Panc1 (cell line): ENCODE measurements at regions of chr2 and their contacts with region 1.

Region 1: GRCh38 chr2:119028327-119029174 is 86.6 kb downstream of the MARCO start:
- DNase-seq: peak; percentile 17
- ATAC-seq: peak; percentile 85
- H3K4me3 ChIP-seq: no peak overlapping the region
- H3K27ac ChIP-seq: no peak overlapping the region
- H3K4me1 ChIP-seq: no peaks in the 10 kb centered on the region
- H3K27me3 ChIP-seq: peaks cover 4% of the 10 kb centered on the region; the same call in 1 of the 2 replicates
- CTCF ChIP-seq: peak; percentile 80

Region 2: DNA sequence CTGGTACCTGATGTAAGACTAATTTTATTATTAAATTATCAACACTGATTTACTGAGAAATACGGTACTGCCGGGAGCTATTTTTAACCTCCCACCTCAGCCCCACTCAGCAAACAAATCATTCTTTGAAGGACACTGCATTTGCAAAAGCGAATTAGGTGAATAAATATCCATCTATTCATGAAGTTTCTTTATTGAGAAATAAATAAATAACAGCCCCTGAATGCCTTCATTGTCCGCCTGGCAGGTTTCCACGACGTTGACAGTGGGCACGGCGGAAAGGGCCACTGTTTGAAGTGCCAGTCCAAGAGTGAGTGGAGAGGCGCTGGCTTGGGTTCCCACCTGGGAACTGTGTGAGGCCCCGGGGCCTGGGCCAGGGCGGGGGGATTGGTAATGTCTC is 114.3 kb after region 1 on chr2:
- CTCF ChIA-PET with region 1: no interaction called
- POLR2A ChIA-PET with region 1: no interaction called
- in situ Hi-C with region 1: no loop called
- intact Hi-C with region 1: no loop called
- DNase-seq: no peak
- ATAC-seq: no peak
- H3K4me3 ChIP-seq: no peak overlapping the region
- H3K27ac ChIP-seq: no peak overlapping the region
- H3K4me1 ChIP-seq: no peaks in the 10 kb centered on the region
- H3K27me3 ChIP-seq: peaks cover 2% of the 10 kb centered on the region; the same call in 1 of the 2 replicates
- CTCF ChIP-seq: no peak

Region 3: DNA sequence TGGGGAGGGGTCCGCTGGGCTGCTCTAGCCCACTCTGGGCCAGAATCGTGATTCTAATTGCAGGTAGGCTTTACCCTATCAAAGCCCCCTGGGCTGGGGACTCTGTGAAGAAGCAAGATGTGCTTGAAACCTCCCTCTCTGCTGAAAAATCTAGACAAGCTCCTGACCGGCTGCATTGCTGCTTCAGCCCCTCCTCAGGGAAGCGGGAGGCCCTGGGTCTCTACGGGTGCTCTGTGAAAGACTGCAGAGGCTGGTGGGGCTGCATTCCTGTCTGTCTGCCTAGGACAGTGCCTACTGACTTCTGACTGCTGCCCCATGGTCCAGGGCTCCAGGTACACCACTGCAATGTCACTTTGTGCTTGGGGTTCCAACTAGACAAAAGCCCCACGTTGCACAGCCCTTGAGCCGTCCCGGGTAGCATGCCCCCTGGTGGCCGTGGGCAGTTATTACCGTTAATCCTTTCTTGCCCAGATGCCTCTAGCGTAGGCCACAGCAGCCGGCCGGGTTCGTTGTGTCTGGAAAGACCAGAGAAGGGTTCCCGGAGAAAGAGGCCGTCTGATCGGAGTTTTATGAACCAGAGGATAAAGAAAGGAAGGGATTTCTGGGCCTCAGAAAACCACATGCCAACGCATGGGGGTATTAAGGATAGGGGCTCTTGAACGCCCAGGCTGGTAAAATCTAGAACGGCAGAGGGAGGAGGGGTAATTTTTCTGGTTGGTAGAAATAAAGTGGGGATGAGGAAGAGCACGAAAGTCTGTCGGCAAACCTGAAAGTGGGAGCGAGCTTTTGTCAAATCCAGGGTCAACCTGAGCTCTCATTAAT is 145.9 kb after region 1 on chr2:
- CTCF ChIA-PET with region 1: no interaction called
- POLR2A ChIA-PET with region 1: no interaction called
- in situ Hi-C with region 1: no loop called
- intact Hi-C with region 1: loop called (anchors 1 kb)
- DNase-seq: no peak
- ATAC-seq: peak; percentile 97
- H3K4me3 ChIP-seq: peak overlapping the region in 1 of 2 experiments; percentile 18; a peak in 2 of 4 replicates
- H3K27ac ChIP-seq: no peak overlapping the region
- H3K4me1 ChIP-seq: no peaks in the 10 kb centered on the region; the same call in 1 of the 2 replicates
- H3K27me3 ChIP-seq: no peaks in the 10 kb centered on the region
- CTCF ChIP-seq: peak; percentile 96

Region 4: DNA sequence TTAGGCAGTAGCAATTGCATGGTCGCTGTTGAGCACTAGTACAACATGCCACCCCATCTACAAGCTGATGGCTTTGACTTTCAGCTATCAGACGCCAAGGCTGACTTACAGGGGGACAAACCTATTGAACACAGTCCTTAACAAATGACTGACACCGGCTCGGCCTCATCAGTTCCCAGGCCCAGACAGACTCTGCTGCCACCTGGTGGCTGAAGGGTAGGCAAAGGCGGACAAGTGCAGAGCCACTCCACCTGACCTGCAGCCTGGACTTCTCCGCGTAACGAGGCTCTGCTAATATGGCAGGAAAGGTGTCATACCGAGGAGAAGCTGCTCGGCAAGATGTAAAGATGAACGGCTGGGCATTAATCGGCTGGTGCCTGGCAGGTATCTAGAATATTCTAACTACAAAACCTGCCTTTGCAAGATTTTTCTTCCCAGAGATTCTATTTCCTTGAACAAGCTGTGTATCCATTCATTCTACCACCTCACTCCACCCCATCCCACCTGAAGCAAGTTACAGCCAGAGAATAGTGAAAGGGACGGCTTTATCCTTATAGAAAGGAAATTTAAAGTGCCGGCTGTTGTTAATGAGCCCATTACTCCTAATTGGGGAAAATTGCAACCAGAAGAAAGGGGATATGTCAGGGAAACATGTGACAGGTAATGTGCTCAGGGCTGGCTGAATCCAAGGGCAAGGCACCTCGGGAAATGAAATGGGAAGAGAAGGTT is 262.5 kb after region 1 on chr2:
- CTCF ChIA-PET with region 1: interaction called, 3 read pairs
- POLR2A ChIA-PET with region 1: no interaction called
- in situ Hi-C with region 1: no loop called
- intact Hi-C with region 1: loop called (anchors 5 kb)
- DNase-seq: peak; percentile 24
- ATAC-seq: peak; percentile 98
- H3K4me3 ChIP-seq: no peak overlapping the region
- H3K27ac ChIP-seq: no peak overlapping the region
- H3K4me1 ChIP-seq: peaks cover 3% of the 10 kb centered on the region; the same call in 1 of the 2 replicates
- H3K27me3 ChIP-seq: no peaks in the 10 kb centered on the region
- CTCF ChIP-seq: peak; percentile 91

Region 5: DNA sequence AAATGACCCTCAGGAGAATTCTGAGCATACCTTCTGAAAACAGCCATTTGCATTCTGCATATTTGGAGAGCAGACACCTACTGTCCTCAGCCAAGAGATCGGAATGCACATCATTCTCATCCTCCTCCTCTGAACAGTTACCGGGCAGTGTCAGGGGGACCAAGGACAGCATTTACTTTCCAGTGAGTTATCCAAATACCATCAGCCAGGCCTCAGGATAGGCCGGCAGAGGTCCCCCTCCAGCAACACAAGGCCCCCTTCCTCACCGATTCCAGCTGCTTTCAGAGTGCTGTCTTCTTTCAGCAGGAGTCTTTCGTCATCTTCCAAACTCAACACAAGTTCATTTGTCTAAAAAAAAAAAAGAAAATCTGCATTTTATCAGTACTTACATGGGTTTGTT is 282.8 kb after region 1 on chr2:
- CTCF ChIA-PET with region 1: no interaction called
- POLR2A ChIA-PET with region 1: no interaction called
- in situ Hi-C with region 1: no loop called
- intact Hi-C with region 1: loop called (anchors 5 kb)
- DNase-seq: no peak
- ATAC-seq: no peak
- H3K4me3 ChIP-seq: no peak overlapping the region
- H3K27ac ChIP-seq: no peak overlapping the region
- H3K4me1 ChIP-seq: no peaks in the 10 kb centered on the region
- H3K27me3 ChIP-seq: no peaks in the 10 kb centered on the region
- CTCF ChIP-seq: no peak